ENCODE measurements at regions of chr4 and their contacts with region 1.

Region 1: GRCh38 chr4:128461291-128462102 is 173.9 kb upstream of the PGRMC2 start:
- DNase-seq: no peak

Region 2: DNA sequence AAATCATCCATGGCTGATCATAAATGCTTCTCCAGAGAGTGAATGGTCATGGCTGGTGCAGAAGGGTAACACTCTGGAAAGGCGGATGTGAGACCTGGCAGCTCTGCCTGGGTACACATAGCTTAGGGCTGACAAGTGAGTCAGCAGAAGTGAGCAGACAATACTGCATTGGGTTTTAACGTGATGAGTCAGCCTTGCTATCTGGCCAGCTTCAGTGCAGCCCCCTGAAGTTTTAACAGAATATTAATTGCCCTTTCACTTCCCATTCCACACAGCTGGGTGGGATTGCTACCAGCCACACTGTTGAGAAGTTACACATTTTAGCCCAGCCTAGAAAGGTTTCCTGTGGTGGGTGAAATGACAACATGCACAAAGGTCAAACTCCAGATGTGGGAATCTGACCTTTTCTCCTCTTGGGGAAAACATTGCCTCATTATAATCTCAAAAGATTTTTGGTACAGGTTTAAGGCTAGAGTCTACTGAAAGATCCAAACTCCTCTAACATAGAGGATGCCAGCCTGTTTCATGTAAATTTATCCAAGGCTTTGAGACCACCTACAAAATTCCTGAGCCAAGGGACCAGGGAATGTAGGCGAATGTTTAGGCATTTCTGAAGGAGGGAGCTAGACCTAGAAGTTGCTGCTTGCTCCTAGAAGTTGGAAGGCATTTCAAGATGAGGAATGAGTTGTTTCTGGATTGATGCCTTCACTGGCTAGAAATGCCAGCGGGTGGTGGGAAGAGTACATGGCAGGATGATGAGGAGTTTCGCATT is 56.4 kb after region 1 on chr4:
- intact Hi-C with region 1: loop called (anchors 1 kb)
- DNase-seq: no peak